ENCODE measurements at regions of chr15 and their contacts with region 1.

Region 1: DNA sequence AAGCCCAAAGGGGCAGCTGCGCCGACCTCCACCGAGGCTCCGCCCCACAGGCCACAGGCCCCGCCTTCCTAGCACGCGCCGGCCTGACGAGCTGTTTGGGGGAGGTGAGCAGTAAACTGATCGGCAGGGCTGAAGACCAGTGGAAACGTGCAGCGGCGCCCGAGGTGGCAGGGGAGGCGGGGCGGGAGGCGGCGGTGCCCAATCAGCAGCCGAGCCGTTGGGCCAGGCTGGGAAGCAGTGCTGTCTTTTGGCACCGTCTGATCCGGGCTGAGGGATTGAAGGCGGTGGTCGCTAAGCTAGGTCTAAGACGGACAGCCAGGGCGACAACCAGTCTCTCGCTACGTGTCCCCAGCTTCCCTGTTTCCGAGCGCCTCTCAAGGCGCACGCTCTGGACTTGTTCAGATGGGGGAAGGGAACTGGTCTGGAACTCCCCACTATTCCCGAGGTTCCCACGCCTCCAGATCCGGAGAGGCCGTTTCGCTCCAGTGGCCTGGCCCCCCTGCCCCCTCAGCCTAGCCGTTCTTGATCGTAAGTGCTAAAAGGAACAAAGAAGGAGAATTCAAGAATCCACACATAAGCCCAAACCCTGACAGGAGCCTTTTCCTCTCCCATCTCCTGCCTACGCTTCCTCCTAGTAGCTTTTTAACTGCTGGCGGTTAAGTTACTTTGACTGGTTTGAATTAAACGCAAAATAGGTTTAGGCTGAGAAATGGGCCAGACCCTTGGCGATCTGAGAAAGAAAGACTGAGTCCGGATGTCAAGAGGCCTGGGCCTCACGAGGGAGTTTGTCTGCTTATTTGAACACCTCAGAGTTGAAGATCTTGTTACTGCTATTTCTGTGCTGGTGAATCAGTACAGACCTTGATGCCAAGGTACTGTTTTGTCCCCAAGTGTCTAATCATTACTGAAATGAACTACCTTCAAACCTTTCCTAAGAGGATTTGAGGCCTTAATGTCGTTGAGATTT is at the start of gene FMN1:
- DNase-seq: peak; percentile 81 to 94 (median 88)
- ATAC-seq: peak; percentile 99 to 100 (median 100)
- H3K4me3 ChIP-seq: peak within 1 kb of the TSS; percentile 59 to 73
- H3K4me3 Mint-ChIP-seq: peak within 1 kb of the TSS; percentile 76 to 82 (median 79)
- H3K27ac ChIP-seq: no peak within 1 kb of the TSS
- H3K27ac Mint-ChIP-seq: peak within 1 kb of the TSS; percentile 74 to 84
- H3K4me1 ChIP-seq: peaks cover 3 to 13% of the 10 kb centered on the region in 2 experiments
- H3K4me1 Mint-ChIP-seq: peaks cover 8 to 15% (median 13%) of the 10 kb centered on the region in 3 donors
- H3K27me3 ChIP-seq: peaks cover 0 to 9% of the 10 kb centered on the region in 2 experiments
- H3K27me3 Mint-ChIP-seq: peaks cover 2 to 6% of the 10 kb centered on the region in 2 donors
- total RNA-seq, gene FMN1: 0.20 to 22.4 (median 14.9) TPM

Region 2: DNA sequence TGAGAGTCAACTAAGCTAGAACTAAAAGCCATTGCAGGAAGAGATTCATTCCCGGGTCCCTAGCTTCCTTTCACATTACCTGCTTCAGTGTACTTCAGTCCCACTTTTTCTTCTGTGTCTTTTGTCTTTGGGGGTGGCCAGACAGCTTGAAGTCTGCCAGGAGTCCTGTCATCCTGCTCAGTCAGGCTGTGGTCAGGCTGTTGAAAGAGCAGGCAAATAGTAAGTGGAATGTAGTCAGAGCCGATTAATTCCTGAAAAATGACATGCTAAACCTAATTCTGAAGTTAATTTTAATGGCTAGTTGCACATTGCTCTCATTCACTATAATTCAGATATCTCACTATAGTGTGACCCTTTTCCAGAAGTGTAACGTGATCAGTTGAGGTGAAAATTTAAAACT is 130.1 kb before region 1 on chr15:
- CTCF ChIA-PET with region 1: no interaction called
- POLR2A ChIA-PET with region 1: interaction called in 1 of 2 experiments, 12 read pairs
- DNase-seq: no peak
- ATAC-seq: no peak
- H3K4me3 ChIP-seq: no peak overlapping the region
- H3K4me3 Mint-ChIP-seq: no peak overlapping the region
- H3K27ac ChIP-seq: no peak overlapping the region
- H3K27ac Mint-ChIP-seq: no peak overlapping the region
- H3K4me1 ChIP-seq: peaks cover 0 to 18% of the 10 kb centered on the region in 2 experiments
- H3K4me1 Mint-ChIP-seq: peaks cover 12 to 38% (median 24%) of the 10 kb centered on the region in 3 donors
- H3K27me3 ChIP-seq: peaks cover 0 to 10% of the 10 kb centered on the region in 2 experiments
- H3K27me3 Mint-ChIP-seq: peaks cover 0 to 23% of the 10 kb centered on the region in 2 donors

Measured in T-cell (primary cell).